ENCODE measurements at regions of chr2 and their contacts with region 1.

Region 1: GRCh38 chr2:135052042-135052876 is at the start of gene RAB3GAP1:
- DNase-seq: peak; percentile 89
- total RNA-seq, gene RAB3GAP1: 47.8 TPM

Region 2: DNA sequence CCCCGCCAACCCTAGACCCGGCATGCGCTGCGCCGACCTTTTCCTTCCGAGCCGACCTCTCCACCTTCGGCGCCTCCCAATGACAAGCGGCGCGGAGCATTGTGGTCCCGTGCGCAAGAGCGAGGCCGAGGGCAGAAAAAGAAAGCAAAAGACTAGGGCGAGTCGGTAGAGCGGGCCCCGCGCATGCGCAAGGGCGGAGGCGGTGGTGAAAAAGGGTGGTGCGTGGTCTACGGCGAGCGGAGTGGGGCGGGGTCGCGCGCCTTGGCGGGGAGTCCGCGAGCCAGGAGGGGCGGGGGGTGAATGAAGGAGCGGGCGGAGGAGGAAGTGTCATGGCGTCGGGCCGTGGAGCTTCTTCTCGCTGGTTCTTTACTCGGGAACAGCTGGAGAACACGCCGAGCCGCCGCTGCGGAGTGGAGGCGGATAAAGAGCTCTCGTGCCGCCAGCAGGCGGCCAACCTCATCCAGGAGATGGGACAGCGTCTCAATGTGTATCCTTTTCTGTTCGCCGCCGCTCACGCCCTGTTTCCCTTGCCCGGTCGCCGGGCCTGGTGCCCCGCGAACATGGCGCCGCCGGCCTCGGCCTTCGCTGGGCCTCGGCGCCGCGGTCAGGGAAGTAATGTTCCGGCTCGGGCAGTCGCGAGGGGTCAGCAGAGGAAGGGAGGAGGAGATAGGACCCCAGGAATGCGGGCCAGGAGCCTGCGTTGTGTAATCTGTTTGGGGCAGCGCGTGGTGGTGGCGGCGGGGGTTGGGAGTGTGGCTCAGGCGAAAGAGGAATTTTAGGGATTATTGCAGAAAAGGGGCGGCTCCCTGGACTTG is 133.5 kb before region 1 on chr2 and contains the start of gene CCNT2:
- intact Hi-C with region 1: loop called (anchors 10 kb)
- DNase-seq: peak; percentile 100
- total RNA-seq, gene CCNT2: 24.1 TPM

Region 3: GRCh38 chr2:134999521-134999920 is 52.7 kb before region 1 on chr2:
- intact Hi-C with region 1: no loop called
- DNase-seq: no peak

Region 4: GRCh38 chr2:135010200-135010942 is 41.9 kb before region 1 on chr2:
- intact Hi-C with region 1: loop called (anchors 5 kb)
- DNase-seq: no peak

Measured in cardiac septum (tissue), 1 donor.